ENCODE measurements at regions of chr3 and their contacts with region 1.

Region 1: DNA sequence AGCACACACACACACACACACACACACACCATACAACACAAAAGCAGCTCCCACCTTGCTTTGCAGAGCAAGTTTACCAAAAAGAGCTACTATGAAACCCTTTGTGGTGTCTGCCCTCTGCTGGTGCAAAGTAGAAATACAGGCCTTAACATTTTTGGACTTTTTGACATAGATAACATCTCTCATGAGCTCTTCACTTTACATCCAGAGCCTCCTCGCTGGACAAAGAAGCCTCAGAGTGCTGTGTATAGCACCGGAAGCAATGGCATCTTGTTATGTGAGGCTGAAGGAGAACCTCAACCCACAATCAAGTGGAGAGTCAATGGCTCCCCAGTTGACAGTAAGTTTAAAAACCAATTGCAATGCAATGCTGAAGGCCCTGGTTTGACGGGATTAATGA is 157.9 kb downstream of the CHL1 start:
- DNase-seq: peak in 2 of 10 donors; percentile 30 to 54
- H3K4me3 ChIP-seq: no peak overlapping the region
- H3K27ac ChIP-seq: peak overlapping the region in 2 of 59 donors; percentile 8 to 21
- H3K27me3 ChIP-seq: peaks cover 0 to 3% (median 0%) of the 10 kb centered on the region in 45 donors
- CTCF ChIP-seq: peak; percentile 60 to 87 (median 76)

Region 2: GRCh38 chr3:197828-198491 is 156.5 kb before region 1 on chr3:
- intact Hi-C with region 1: loop called in 1 of 2 experiments (anchors 5 kb)
- DNase-seq: peak in 9 of 10 donors; percentile 5 to 73 (median 45)
- H3K4me3 ChIP-seq: peak overlapping the region; percentile 34 to 84 (median 70)
- H3K27ac ChIP-seq: peak overlapping the region in 58 of 59 donors; percentile 34 to 97 (median 88)
- H3K27me3 ChIP-seq: peaks cover 0 to 62% (median 8%) of the 10 kb centered on the region in 45 donors
- CTCF ChIP-seq: no peak

Region 3: GRCh38 chr3:264394-265156 is 89.9 kb before region 1 on chr3:
- intact Hi-C with region 1: no loop called
- DNase-seq: no peak
- H3K4me3 ChIP-seq: no peak overlapping the region
- H3K27ac ChIP-seq: no peak overlapping the region
- H3K27me3 ChIP-seq: no peaks in the 10 kb centered on the region
- CTCF ChIP-seq: no peak

Region 4: GRCh38 chr3:396293-396692 is 41.9 kb after region 1 on chr3:
- intact Hi-C with region 1: no loop called
- DNase-seq: no peak
- H3K4me3 ChIP-seq: no peak overlapping the region
- H3K27ac ChIP-seq: no peak overlapping the region
- H3K27me3 ChIP-seq: no peaks in the 10 kb centered on the region
- CTCF ChIP-seq: no peak

Measured in dorsolateral prefrontal cortex (tissue), 120 donors.